Activated CD8-positive, alpha-beta T cell treated with anti-CD3 and anti-CD28 coated beads for 36 hours (primary cell): ENCODE measurements at regions of chr1 and their contacts with region 1.

Region 1: DNA sequence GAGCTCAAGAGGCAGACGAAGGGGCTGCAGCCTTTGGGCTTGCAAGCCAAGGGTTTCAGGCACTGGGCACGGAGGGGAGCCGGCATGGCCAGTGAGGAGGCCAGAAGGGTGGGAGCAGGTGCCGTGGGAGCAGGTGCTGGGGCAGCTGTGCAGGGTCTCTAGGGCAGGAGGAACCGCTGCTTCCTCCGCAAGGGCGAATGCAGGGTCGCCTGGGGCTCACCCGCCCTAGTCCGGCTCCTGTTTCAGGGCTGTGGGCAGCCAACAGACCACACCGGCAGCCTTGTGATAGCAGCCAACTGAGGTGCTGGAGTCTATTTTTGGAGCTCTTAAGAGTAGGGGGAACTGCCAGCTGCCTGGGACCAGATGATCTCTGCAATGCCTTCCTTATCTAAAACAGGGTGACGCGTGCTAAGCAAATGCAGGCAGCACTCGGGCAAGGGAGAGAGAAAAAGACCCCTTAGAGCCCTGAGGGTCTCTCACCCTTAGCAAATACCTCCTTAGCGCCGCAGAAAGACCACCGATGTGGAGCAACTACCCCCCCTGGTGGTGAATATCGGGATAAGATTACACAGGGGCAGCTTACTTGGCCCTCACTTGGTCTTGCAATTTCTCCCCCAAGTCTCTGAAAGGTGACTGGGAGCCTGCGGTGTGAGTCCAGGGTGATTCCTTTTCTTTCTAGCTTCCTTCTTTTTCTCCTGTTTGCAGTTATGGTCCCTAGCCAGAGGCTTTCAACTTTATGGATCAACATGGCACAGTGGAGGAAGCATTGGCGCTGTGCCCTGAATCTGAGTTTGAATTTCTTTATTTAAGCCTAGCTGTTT is 20.7 kb upstream of the MAPKAPK2 start:
- DNase-seq: peak; percentile 84
- ATAC-seq: peak; percentile 82
- H3K4me3 Mint-ChIP-seq: no peak overlapping the region
- H3K27ac Mint-ChIP-seq: no peak overlapping the region
- H3K4me1 Mint-ChIP-seq: peaks cover 33% of the 10 kb centered on the region
- H3K27me3 Mint-ChIP-seq: peaks cover 22% of the 10 kb centered on the region
- CTCF ChIP-seq: peak; percentile 92

Region 2: GRCh38 chr1:206479183-206480125 is 184.6 kb before region 1 on chr1:
- CTCF ChIA-PET with region 1: interaction called, 108 read pairs
- POLR2A ChIA-PET with region 1: no interaction called
- intact Hi-C with region 1: no loop called
- DNase-seq: peak; percentile 91
- ATAC-seq: peak; percentile 87
- H3K4me3 Mint-ChIP-seq: no peak overlapping the region
- H3K27ac Mint-ChIP-seq: peak overlapping the region; percentile 60
- H3K4me1 Mint-ChIP-seq: peaks cover 33% of the 10 kb centered on the region
- H3K27me3 Mint-ChIP-seq: no peaks in the 10 kb centered on the region
- CTCF ChIP-seq: peak; percentile 79

Region 3: DNA sequence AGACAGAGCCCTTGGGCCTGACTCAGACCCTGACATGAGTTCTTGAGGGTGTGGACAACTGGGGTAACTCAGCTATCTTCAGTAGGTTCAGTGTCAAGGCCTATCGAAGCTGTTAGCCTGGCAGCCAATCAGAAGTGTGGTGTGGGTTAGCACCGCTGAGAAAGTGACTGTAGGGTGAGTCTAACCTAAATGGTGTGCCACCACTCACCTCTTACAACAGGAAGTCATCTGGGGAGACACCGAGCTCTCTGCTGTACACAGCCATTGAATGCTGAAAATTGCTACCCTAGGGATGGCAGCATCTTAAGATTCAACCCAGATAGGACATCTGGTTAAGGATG is 112.1 kb before region 1 on chr1:
- CTCF ChIA-PET with region 1: interaction called, 17 read pairs
- POLR2A ChIA-PET with region 1: no interaction called
- intact Hi-C with region 1: no loop called
- DNase-seq: peak; percentile 94
- ATAC-seq: peak; percentile 82
- H3K4me3 Mint-ChIP-seq: peak overlapping the region; percentile 64
- H3K27ac Mint-ChIP-seq: peak overlapping the region; percentile 88
- H3K4me1 Mint-ChIP-seq: peaks cover 53% of the 10 kb centered on the region
- H3K27me3 Mint-ChIP-seq: no peaks in the 10 kb centered on the region
- CTCF ChIP-seq: no peak

Region 4: DNA sequence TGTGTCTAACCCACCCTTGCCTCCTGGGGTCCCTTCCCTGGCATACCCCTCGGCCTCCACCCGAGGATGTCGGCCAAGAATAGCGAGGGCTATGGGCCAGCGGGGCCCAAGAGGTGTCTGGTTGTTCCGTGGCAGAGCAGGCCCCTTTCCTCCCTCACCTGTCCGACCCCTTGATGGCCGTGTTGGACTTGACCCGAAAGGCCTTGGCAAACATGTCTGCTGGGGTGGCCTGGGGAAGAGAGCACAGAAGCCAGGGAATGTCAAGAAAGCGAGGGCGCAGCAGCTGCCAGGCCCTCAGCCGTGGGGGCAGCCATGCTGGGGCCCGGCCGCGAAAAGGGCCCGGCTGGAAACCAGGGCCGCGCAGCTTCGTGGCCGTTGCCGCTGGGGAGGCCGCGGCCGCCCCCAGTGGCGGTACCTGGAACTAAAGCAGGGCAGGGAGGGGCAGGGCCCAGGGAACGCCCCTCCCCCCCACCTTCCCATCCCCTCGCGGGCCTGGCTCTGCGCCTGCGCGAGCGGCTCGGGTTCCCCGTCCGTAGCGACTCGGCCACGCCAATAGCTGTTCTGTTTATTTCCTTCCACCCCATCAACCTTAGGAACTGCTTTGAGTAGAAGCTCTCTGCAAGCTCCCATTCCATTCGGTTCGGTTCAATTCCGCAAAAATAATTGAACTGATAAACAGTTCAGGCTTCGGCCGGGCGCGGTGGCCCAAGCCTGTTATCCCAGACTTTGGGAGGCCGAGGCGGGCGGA is 51.7 kb before region 1 on chr1 and contains the start of gene EIF2D:
- CTCF ChIA-PET with region 1: interaction called, 84 read pairs
- POLR2A ChIA-PET with region 1: interaction called, 3 read pairs
- intact Hi-C with region 1: loop called (anchors 10 kb)
- DNase-seq: peak; percentile 95
- ATAC-seq: peak; percentile 96
- H3K4me3 Mint-ChIP-seq: peak within 1 kb of the TSS; percentile 91
- H3K27ac Mint-ChIP-seq: peak within 1 kb of the TSS; percentile 92
- H3K4me1 Mint-ChIP-seq: peaks cover 39% of the 10 kb centered on the region
- H3K27me3 Mint-ChIP-seq: no peaks in the 10 kb centered on the region
- CTCF ChIP-seq: peak; percentile 89
- total RNA-seq, gene EIF2D: 100 to 102 TPM

Region 5: DNA sequence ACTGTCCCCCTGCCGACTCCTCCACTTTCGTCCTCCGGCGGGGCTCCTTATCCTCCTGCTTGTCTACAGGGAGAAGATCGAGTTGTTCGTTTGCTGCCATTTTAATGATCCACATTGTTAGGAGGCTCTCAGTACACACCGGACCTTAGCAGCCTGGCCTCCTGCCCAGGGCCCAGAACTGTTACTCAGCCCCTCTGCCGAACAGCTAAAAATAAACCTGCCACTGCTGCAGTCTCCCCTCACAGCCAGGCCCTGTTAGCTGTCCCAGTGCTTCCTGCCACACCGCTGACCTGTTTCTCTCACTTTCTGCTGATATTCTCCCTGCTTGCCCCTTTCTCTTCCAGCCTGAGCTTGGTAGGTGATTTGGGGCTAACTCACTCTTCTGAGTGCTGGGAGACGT is 29.0 kb after region 1 on chr1:
- CTCF ChIA-PET with region 1: interaction called, 25 read pairs
- POLR2A ChIA-PET with region 1: interaction called, 3 read pairs
- intact Hi-C with region 1: no loop called
- DNase-seq: no peak
- ATAC-seq: no peak
- H3K4me3 Mint-ChIP-seq: no peak overlapping the region
- H3K27ac Mint-ChIP-seq: no peak overlapping the region
- H3K4me1 Mint-ChIP-seq: peaks cover 74% of the 10 kb centered on the region
- H3K27me3 Mint-ChIP-seq: no peaks in the 10 kb centered on the region
- CTCF ChIP-seq: no peak

Region 6: DNA sequence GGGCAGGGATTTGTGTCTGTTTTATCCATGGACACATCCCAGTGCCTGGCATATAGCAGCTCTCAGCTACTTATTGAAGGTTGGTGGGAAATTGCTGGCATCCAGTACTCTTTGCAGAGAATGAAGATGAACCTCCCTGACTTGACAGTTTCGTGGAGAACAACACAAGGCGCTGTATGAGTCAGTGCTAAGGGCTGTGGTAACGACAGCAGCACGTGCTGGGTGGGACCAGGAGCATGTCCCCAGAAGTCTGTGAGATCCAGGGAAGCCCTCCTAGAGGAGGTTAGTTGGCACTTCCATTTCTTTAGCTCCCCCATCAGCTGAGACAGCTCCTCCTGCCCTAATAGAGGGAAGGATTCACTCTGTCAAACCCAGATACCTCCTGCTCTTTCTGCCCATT is 80.6 kb after region 1 on chr1:
- CTCF ChIA-PET with region 1: no interaction called
- POLR2A ChIA-PET with region 1: no interaction called
- intact Hi-C with region 1: no loop called
- DNase-seq: peak; percentile 63
- ATAC-seq: no peak
- H3K4me3 Mint-ChIP-seq: no peak overlapping the region
- H3K27ac Mint-ChIP-seq: no peak overlapping the region
- H3K4me1 Mint-ChIP-seq: peaks cover 61% of the 10 kb centered on the region
- H3K27me3 Mint-ChIP-seq: no peaks in the 10 kb centered on the region
- CTCF ChIP-seq: no peak

Region 7: GRCh38 chr1:206808615-206809014 is 144.6 kb after region 1 on chr1:
- CTCF ChIA-PET with region 1: interaction called, 24 read pairs
- POLR2A ChIA-PET with region 1: no interaction called
- intact Hi-C with region 1: no loop called
- DNase-seq: peak; percentile 69
- ATAC-seq: peak; percentile 89
- H3K4me3 Mint-ChIP-seq: no peak overlapping the region
- H3K27ac Mint-ChIP-seq: no peak overlapping the region
- H3K4me1 Mint-ChIP-seq: peaks cover 49% of the 10 kb centered on the region
- H3K27me3 Mint-ChIP-seq: no peaks in the 10 kb centered on the region
- CTCF ChIP-seq: peak; percentile 69